ENCODE measurements at regions of chr1 and their contacts with region 1.

Region 1: DNA sequence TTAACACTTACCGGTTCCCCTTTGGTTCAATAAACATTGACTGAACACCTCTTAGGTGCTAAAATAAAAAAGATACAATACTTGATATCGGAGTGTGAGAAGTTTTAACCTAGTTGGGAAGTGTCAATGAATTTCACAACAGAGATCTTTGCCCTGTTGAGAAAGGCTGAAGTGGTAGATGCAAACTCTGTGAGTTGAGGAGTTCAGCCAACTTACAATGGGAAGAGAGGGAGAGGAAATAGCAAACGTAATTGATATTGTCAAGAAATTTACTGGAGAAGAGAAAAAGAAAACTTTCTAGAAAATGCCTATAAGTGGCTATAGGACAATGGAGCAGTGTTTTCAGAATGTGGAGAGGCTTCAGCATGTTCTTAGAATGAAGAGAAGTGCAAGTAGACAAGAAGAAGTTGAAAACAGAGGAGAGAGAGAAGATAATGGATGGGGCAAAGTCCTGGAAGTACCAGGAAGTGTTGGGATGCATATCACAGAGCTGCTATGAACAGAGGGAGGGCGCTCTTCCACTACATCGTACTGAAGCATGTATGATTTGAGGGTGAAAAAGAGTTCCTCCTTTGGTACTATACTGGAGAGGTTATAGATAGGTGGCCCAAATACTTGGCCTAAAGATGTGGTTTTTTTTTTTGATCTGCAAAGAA is 48.9 kb downstream of the MEF2D start:
- DNase-seq: no peak
- H3K4me3 ChIP-seq: no peak overlapping the region
- H3K27ac ChIP-seq: no peak overlapping the region
- H3K4me1 ChIP-seq: peaks cover 0 to 20% (median 6%) of the 10 kb centered on the region in 6 donors
- H3K27me3 ChIP-seq: peaks cover 0 to 11% (median 0%) of the 10 kb centered on the region in 7 donors
- CTCF ChIP-seq: no peak
- POLR2A ChIP-seq: no peak

Region 2: GRCh38 chr1:156551866-156552265 is 100.2 kb after region 1 on chr1:
- intact Hi-C with region 1: no loop called
- DNase-seq: no peak
- H3K4me3 ChIP-seq: no peak overlapping the region
- H3K27ac ChIP-seq: no peak overlapping the region
- H3K4me1 ChIP-seq: peaks cover 0 to 35% (median 14%) of the 10 kb centered on the region in 6 donors
- H3K27me3 ChIP-seq: no peaks in the 10 kb centered on the region
- CTCF ChIP-seq: no peak
- POLR2A ChIP-seq: no peak

Region 3: GRCh38 chr1:156608036-156608674 is 156.5 kb after region 1 on chr1:
- intact Hi-C with region 1: loop called (anchors 5 kb)
- DNase-seq: no peak
- H3K4me3 ChIP-seq: no peak overlapping the region
- H3K27ac ChIP-seq: peak overlapping the region in 1 of 8 donors; percentile 6
- H3K4me1 ChIP-seq: peaks cover 6 to 25% (median 12%) of the 10 kb centered on the region in 6 donors
- H3K27me3 ChIP-seq: peaks cover 0 to 35% (median 0%) of the 10 kb centered on the region in 7 donors
- CTCF ChIP-seq: peak; percentile 48 to 86 (median 71)
- POLR2A ChIP-seq: no peak

Measured in spleen (tissue), 13 donors.